CD14-positive monocyte (primary cell): ENCODE measurements at regions of chr6 and their contacts with region 1.

Region 1: DNA sequence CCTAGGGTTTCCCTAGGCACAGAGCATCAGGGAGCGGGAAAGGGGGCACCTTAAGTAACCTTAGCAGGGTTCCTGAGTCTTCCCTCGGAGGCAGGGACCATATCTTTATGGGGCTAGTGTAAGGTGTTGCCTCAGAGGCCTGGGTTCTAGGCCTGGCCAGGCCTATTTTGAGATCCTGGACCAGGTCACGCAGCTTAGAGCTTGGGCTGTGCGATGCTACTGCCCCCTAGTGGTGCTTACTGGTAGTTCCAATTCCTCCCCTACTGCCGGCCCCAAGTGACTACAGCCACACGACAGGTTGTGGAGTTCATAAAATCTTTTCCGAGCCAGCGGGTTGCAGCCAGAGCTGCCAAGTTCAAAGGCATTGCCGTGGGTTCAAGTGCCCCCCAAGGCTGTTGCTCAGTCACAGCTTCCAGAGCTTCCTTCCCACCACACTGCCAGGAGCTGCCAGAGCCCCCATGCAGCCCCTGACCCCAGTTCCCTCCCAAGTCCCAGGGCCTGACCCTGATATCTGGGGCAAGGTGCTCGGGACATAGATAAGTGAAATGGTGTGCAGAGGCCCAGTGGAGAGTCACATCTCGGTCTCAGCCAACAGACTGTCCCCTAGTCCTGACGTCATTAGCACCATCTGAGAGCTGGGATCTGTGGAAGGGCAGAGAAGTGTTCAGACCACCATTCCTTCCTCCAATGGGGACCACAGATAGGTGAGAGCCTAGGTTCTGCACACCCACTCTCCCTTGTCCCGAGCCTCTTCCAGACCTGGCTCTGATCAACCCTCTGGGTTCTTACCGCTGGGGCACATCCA is 3.3 kb downstream of the LRRC73 start:
- DNase-seq: peak; percentile 74 to 82 (median 79)
- H3K4me3 ChIP-seq: no peak overlapping the region
- H3K4me3 Mint-ChIP-seq: no peak overlapping the region
- H3K27ac ChIP-seq: no peak overlapping the region
- H3K27ac Mint-ChIP-seq: peak overlapping the region in 1 of 7 donors; percentile 51
- H3K4me1 ChIP-seq: peaks cover 19 to 26% of the 10 kb centered on the region in 2 donors
- H3K4me1 Mint-ChIP-seq: peaks cover 25% of the 10 kb centered on the region
- H3K27me3 ChIP-seq: peaks cover 11 to 27% of the 10 kb centered on the region in 2 donors
- H3K27me3 Mint-ChIP-seq: peaks cover 22 to 36% (median 25%) of the 10 kb centered on the region in 3 donors
- CTCF ChIP-seq: peak; percentile 91

Region 2: GRCh38 chr6:43263314-43264178 is 243.3 kb before region 1 on chr6:
- intact Hi-C with region 1: loop called (anchors 2 to 5 kb)
- DNase-seq: peak; percentile 57 to 74 (median 72)
- H3K4me3 ChIP-seq: no peak overlapping the region
- H3K4me3 Mint-ChIP-seq: peak overlapping the region in 1 of 2 donors; percentile 39
- H3K27ac ChIP-seq: no peak overlapping the region
- H3K27ac Mint-ChIP-seq: peak overlapping the region in 2 of 7 donors; percentile 32 to 79
- H3K4me1 ChIP-seq: no peaks in the 10 kb centered on the region
- H3K4me1 Mint-ChIP-seq: peaks cover 4% of the 10 kb centered on the region
- H3K27me3 ChIP-seq: peaks cover 2 to 11% of the 10 kb centered on the region in 2 donors
- H3K27me3 Mint-ChIP-seq: peaks cover 16 to 26% (median 17%) of the 10 kb centered on the region in 3 donors
- CTCF ChIP-seq: peak; percentile 82

Region 3: DNA sequence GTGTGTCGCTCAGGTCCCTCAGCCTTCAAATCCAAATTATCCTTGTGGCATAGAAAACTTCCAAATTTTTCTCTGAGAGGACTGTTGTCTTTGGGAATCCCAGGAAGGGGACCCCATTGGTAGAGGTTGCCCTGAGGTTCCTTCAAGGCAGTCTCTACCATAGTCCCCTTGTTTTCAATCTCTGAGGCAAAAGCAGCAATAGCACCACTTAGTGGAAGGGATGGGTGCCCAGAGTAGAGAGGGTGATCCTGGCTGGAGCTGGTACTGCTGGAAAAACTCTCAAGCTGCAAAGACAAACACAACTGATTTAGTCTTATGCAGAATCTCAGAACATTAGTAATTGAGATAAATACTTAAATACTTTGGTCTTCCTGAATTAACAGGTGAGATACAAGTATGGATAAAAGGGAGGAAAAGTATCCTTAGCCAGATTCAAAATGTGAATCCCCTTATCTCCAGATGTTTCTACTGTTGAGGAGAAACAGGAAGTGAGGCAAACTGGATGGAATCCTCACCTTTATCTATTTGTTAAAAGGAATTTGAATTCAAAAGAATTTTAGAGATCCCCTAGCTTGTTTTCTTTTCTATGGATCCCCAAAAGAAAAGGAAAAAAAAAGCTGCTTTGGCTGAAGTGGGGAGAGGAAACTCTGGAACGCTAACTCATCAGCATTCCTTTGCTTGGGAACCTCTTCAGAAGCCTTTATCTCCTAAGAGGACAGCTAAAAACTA is 150.8 kb before region 1 on chr6:
- intact Hi-C with region 1: loop called (anchors 10 kb)
- DNase-seq: no peak
- H3K4me3 ChIP-seq: no peak overlapping the region
- H3K4me3 Mint-ChIP-seq: no peak overlapping the region
- H3K27ac ChIP-seq: peak overlapping the region in 1 of 2 donors; percentile 6
- H3K27ac Mint-ChIP-seq: peak overlapping the region in 1 of 7 donors; percentile 32
- H3K4me1 ChIP-seq: no peaks in the 10 kb centered on the region
- H3K4me1 Mint-ChIP-seq: no peaks in the 10 kb centered on the region
- H3K27me3 ChIP-seq: no peaks in the 10 kb centered on the region
- H3K27me3 Mint-ChIP-seq: no peaks in the 10 kb centered on the region
- CTCF ChIP-seq: no peak

Region 4: GRCh38 chr6:43454696-43455530 is 52.0 kb before region 1 on chr6:
- intact Hi-C with region 1: loop called (anchors 1 to 2 kb)
- DNase-seq: peak; percentile 62 to 75 (median 62)
- H3K4me3 ChIP-seq: peak overlapping the region; percentile 44 to 88 (median 51)
- H3K4me3 Mint-ChIP-seq: peak overlapping the region; percentile 79 to 89
- H3K27ac ChIP-seq: no peak overlapping the region
- H3K27ac Mint-ChIP-seq: peak overlapping the region in 1 of 7 donors; percentile 30
- H3K4me1 ChIP-seq: peaks cover 12 to 20% of the 10 kb centered on the region in 2 donors
- H3K4me1 Mint-ChIP-seq: peaks cover 14% of the 10 kb centered on the region
- H3K27me3 ChIP-seq: peaks cover 17 to 33% of the 10 kb centered on the region in 2 donors
- H3K27me3 Mint-ChIP-seq: peaks cover 37 to 45% (median 41%) of the 10 kb centered on the region in 3 donors
- CTCF ChIP-seq: peak; percentile 68